PC-3 (cell line): ENCODE measurements at regions of chr1 and their contacts with region 1.

Region 1: GRCh38 chr1:165717918-165718515 is 19.7 kb upstream of the ALDH9A1 start:
- DNase-seq: peak; percentile 82
- ATAC-seq: peak; percentile 92
- H3K4me3 ChIP-seq: no peak overlapping the region
- H3K27ac ChIP-seq: no peak overlapping the region
- H3K4me1 ChIP-seq: no peaks in the 10 kb centered on the region
- H3K27me3 ChIP-seq: no peaks in the 10 kb centered on the region
- CTCF ChIP-seq: peak; percentile 94

Region 2: GRCh38 chr1:165527251-165528007 is 190.6 kb before region 1 on chr1:
- CTCF ChIA-PET with region 1: no interaction called
- POLR2A ChIA-PET with region 1: no interaction called
- intact Hi-C with region 1: no loop called
- DNase-seq: no peak
- ATAC-seq: no peak
- H3K4me3 ChIP-seq: no peak overlapping the region
- H3K27ac ChIP-seq: no peak overlapping the region
- H3K4me1 ChIP-seq: no peaks in the 10 kb centered on the region
- H3K27me3 ChIP-seq: peaks cover 64% of the 10 kb centered on the region
- CTCF ChIP-seq: no peak

Region 3: DNA sequence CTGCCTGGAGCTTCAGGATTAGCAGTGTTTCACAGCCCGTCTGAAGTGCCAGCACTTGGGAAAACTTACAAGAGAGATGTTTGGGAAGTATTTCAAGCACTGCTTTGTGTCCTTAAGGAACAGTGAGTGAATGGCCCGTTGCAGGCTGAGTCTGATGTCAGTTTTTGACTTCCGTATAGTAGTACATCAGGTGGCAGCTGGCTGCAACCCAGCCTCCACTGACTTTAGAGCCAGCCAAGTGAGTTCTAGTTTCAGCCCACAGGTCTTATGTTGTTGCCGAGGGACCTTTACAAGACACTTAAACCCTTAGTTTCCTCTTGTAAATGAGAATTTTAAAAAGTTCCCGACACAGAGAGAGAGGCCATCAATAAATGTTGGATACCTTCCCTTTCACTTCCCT is 144.4 kb after region 1 on chr1:
- CTCF ChIA-PET with region 1: no interaction called
- POLR2A ChIA-PET with region 1: no interaction called
- intact Hi-C with region 1: no loop called
- DNase-seq: no peak
- ATAC-seq: no peak
- H3K4me3 ChIP-seq: no peak overlapping the region
- H3K27ac ChIP-seq: no peak overlapping the region
- H3K4me1 ChIP-seq: peaks cover 7% of the 10 kb centered on the region
- H3K27me3 ChIP-seq: no peaks in the 10 kb centered on the region
- CTCF ChIP-seq: no peak

Region 4: DNA sequence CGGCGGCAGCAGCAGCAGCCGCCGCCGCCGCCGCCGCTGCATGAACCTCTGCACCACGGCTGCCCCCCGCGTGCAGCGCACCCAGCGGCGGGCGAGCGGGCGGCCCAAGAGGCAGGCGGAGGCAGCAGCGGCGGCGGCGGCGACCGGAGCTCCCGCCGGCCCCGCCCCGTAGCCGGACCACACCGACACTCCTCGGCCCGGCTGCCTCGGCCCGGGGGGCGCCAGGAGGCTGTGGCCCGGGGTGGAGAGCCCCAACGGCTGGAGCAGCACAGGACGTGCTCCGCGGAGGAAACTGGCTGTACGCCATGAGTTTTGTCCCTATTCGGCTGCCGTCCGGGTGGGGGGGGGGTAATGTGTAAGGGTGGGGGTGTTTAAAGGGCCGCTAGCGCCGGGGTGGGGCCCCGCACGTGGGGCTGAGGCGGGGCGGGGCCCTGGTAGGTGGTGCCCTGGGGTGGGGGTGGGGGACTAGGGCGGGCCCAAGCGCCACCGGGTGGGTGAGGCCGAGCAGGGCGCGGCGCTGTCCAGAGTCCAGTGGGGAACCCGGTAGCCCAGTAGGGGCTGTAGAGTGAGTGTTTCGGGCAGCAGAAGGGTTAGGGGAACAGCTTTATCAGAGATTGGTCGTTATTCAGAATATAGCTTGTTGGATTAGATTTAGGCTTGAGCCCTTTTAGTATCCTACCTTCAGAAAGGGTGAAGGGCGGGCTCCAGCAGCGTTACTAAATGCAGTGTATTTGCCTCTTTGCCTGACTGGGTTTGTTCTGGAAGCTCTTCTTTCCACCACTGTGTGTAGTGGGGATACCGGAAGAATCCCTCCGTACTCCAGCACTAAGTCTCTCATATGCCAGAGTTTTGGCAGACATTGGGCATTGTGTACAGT is 448.9 kb after region 1 on chr1 and contains the start of gene FAM78B:
- CTCF ChIA-PET with region 1: no interaction called
- POLR2A ChIA-PET with region 1: no interaction called
- intact Hi-C with region 1: loop called (anchors 10 kb)
- DNase-seq: peak; percentile 46
- ATAC-seq: peak; percentile 63
- H3K4me3 ChIP-seq: peak within 1 kb of the TSS; percentile 59
- H3K27ac ChIP-seq: no peak within 1 kb of the TSS
- H3K4me1 ChIP-seq: no peaks in the 10 kb centered on the region
- H3K27me3 ChIP-seq: peaks cover 48% of the 10 kb centered on the region
- CTCF ChIP-seq: no peak
- total RNA-seq, gene FAM78B: 0.12 and 0.26 TPM in 2 replicates